PC-3 (cell line): ENCODE measurements at regions of chr15 and their contacts with region 1.

Region 1: DNA sequence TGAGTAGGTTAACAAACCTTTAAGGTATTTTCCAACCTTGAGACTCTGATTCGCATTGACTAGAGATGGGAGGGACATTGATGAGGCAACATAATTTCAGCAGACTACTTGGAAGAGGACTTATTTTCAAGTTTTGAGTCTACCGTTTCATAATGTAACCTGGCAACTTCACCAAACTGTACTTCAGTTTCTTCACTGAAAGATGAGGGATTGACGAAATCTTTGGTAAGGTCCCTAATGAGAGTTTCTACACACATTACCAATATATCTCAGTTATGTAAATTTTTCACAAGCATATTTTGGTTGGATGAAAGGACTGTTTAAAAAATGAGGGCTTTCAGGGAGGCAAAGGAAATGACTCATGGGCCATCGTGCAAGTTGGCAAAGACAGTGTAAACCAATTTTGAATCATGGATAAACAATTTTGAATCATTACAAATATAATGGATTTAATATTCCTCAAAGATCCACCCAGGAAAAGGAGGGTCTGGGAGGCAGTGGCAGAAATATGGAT is 28.7 kb upstream of the SEMA6D start:
- DNase-seq: peak; percentile 73
- ATAC-seq: peak; percentile 64
- H3K4me3 ChIP-seq: peak overlapping the region; percentile 21; the same call in 1 of the 2 replicates
- H3K27ac ChIP-seq: peak overlapping the region; percentile 68
- H3K4me1 ChIP-seq: peaks cover 23% of the 10 kb centered on the region
- H3K27me3 ChIP-seq: no peaks in the 10 kb centered on the region
- CTCF ChIP-seq: no peak

Region 2: GRCh38 chr15:47639042-47639441 is 49.6 kb before region 1 on chr15:
- CTCF ChIA-PET with region 1: no interaction called
- POLR2A ChIA-PET with region 1: no interaction called
- intact Hi-C with region 1: loop called (anchors 10 kb)
- DNase-seq: no peak
- ATAC-seq: no peak
- H3K4me3 ChIP-seq: no peak overlapping the region
- H3K27ac ChIP-seq: no peak overlapping the region
- H3K4me1 ChIP-seq: no peaks in the 10 kb centered on the region
- H3K27me3 ChIP-seq: no peaks in the 10 kb centered on the region
- CTCF ChIP-seq: no peak

Region 3: DNA sequence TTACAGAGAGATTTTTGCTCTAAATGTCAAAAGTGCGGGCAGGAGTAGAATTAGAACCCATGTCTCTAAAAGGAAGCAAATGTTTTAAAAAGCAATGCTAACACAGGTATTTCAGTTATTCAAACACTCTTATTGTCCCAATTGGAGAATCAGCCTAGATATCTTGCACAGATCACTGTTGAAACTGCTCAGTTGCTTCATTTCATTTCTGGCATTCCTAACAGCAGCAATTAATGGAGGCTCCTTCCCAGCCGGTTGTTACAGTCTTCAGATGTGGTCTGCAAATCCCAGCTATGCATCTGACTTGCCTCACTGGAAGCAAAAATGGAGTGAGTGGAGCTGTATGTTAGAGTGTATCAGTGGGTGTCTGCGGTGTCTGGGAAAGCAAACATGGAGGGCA is 26.9 kb before region 1 on chr15:
- CTCF ChIA-PET with region 1: no interaction called
- POLR2A ChIA-PET with region 1: no interaction called
- intact Hi-C with region 1: no loop called
- DNase-seq: no peak
- ATAC-seq: no peak
- H3K4me3 ChIP-seq: no peak overlapping the region
- H3K27ac ChIP-seq: no peak overlapping the region
- H3K4me1 ChIP-seq: peaks cover 27% of the 10 kb centered on the region
- H3K27me3 ChIP-seq: no peaks in the 10 kb centered on the region
- CTCF ChIP-seq: no peak

Region 4: DNA sequence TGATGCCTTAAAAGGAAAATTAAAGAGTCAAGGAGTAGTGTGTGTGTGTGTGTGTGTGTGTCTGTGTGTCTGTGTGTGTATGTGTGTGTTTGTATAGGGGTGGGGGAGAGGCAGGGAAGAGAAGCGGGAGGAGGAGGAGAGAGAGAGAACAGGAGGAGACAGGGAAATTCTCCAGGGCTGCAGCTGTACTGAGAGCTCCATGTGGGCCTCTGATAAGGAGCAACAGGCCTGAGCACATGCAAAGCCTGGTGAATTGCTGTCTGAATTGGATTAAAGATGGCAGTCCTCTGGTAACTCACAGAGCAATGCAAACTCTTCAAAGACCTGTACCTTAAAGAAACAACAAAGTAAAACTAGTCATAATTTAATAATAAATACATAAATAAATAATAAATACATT is 99.2 kb after region 1 on chr15:
- CTCF ChIA-PET with region 1: no interaction called
- POLR2A ChIA-PET with region 1: no interaction called
- intact Hi-C with region 1: no loop called
- DNase-seq: no peak
- ATAC-seq: no peak
- H3K4me3 ChIP-seq: no peak overlapping the region
- H3K27ac ChIP-seq: no peak overlapping the region
- H3K4me1 ChIP-seq: no peaks in the 10 kb centered on the region
- H3K27me3 ChIP-seq: no peaks in the 10 kb centered on the region
- CTCF ChIP-seq: no peak